ENCODE measurements at regions of chr2 and their contacts with region 1.

Region 1: GRCh38 chr2:162013514-162014475 is 60.2 kb downstream of the DPP4 start:
- DNase-seq: peak; percentile 39 to 61 (median 48)
- H3K4me3 ChIP-seq: no peak overlapping the region
- H3K4me3 Mint-ChIP-seq: peak overlapping the region; percentile 58 to 84 (median 76)
- H3K27ac ChIP-seq: peak overlapping the region; percentile 72
- H3K27ac Mint-ChIP-seq: peak overlapping the region; percentile 92 to 100 (median 97)
- H3K4me1 ChIP-seq: peaks cover 71% of the 10 kb centered on the region
- H3K4me1 Mint-ChIP-seq: peaks cover 52 to 79% (median 64%) of the 10 kb centered on the region in 4 donors
- H3K27me3 ChIP-seq: no peaks in the 10 kb centered on the region
- H3K27me3 Mint-ChIP-seq: no peaks in the 10 kb centered on the region

Region 2: GRCh38 chr2:161160226-161161069 is 853.3 kb before region 1 on chr2 and contains the start of gene TANK:
- CTCF ChIA-PET with region 1: no interaction called
- POLR2A ChIA-PET with region 1: no interaction called
- intact Hi-C with region 1: loop called (anchors 10 kb)
- DNase-seq: peak; percentile 89 to 94 (median 91)
- H3K4me3 ChIP-seq: peak within 1 kb of the TSS; percentile 86 to 90
- H3K4me3 Mint-ChIP-seq: peak within 1 kb of the TSS; percentile 96 to 100 (median 98)
- H3K27ac ChIP-seq: peak within 1 kb of the TSS; percentile 95
- H3K27ac Mint-ChIP-seq: peak within 1 kb of the TSS; percentile 94 to 99 (median 98)
- H3K4me1 ChIP-seq: peaks cover 54% of the 10 kb centered on the region
- H3K4me1 Mint-ChIP-seq: peaks cover 37 to 84% (median 61%) of the 10 kb centered on the region in 4 donors
- H3K27me3 ChIP-seq: no peaks in the 10 kb centered on the region
- H3K27me3 Mint-ChIP-seq: no peaks in the 10 kb centered on the region
- total RNA-seq, gene TANK: 90.2 to 91.2 TPM

Region 3: GRCh38 chr2:161954103-161954502 is 59.7 kb before region 1 on chr2:
- CTCF ChIA-PET with region 1: interaction called, 22 read pairs
- POLR2A ChIA-PET with region 1: interaction called, 29 read pairs
- intact Hi-C with region 1: loop called (anchors 1 kb)
- DNase-seq: peak; percentile 56 to 72 (median 65)
- H3K4me3 ChIP-seq: no peak overlapping the region
- H3K4me3 Mint-ChIP-seq: peak overlapping the region in 7 of 8 donors; percentile 23 to 78 (median 60)
- H3K27ac ChIP-seq: no peak overlapping the region
- H3K27ac Mint-ChIP-seq: peak overlapping the region; percentile 14 to 90 (median 59)
- H3K4me1 ChIP-seq: peaks cover 69% of the 10 kb centered on the region
- H3K4me1 Mint-ChIP-seq: peaks cover 48 to 61% (median 54%) of the 10 kb centered on the region in 4 donors
- H3K27me3 ChIP-seq: no peaks in the 10 kb centered on the region
- H3K27me3 Mint-ChIP-seq: no peaks in the 10 kb centered on the region

Region 4: GRCh38 chr2:161998857-161999256 is 14.9 kb before region 1 on chr2:
- CTCF ChIA-PET with region 1: interaction called, 16 read pairs
- POLR2A ChIA-PET with region 1: interaction called, 33 read pairs
- intact Hi-C with region 1: loop called (anchors 1 kb)
- DNase-seq: no peak
- H3K4me3 ChIP-seq: no peak overlapping the region
- H3K4me3 Mint-ChIP-seq: peak overlapping the region in 2 of 8 donors; percentile 11 to 49
- H3K27ac ChIP-seq: no peak overlapping the region
- H3K27ac Mint-ChIP-seq: peak overlapping the region; percentile 3 to 91 (median 79)
- H3K4me1 ChIP-seq: peaks cover 31% of the 10 kb centered on the region
- H3K4me1 Mint-ChIP-seq: peaks cover 33 to 63% (median 46%) of the 10 kb centered on the region in 4 donors
- H3K27me3 ChIP-seq: no peaks in the 10 kb centered on the region
- H3K27me3 Mint-ChIP-seq: no peaks in the 10 kb centered on the region

Region 5: DNA sequence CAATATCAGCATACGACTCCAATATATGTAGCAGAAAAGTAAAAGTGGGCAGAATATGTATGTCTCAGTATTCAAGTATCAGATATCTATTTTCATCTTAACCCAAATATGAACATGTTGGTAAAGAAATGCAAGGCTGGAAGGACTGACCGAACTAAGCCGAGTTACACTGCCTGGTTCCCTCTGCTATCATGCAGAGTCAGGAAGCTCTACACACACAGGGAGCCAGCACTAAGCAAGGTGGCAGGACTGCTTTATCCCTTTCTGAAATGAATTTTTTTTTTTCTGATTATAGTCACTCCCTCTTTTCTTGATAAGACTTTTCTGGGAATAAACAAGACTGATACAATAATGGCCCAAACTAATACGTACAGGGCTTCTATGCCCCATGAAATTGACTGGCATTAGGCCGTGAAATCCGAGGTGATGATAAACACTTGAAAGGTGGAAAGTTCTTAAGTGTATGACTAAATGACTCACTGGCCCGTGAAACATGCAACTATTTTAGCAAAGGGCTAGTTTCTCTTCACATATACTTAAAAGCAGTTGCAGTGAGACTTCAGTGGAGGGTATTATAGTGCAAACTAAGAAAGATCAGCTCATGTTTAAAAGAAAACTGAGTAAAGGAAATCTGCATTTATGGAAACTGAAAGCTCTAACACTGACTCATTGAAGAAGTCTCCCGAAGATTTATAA is 45.3 kb after region 1 on chr2:
- CTCF ChIA-PET with region 1: interaction called, 11 read pairs
- POLR2A ChIA-PET with region 1: interaction called, 37 read pairs
- intact Hi-C with region 1: loop called (anchors 1 kb)
- DNase-seq: peak in 2 of 5 donors; percentile 16 to 47
- H3K4me3 ChIP-seq: peak overlapping the region in 1 of 2 donors; percentile 4
- H3K4me3 Mint-ChIP-seq: peak overlapping the region; percentile 75 to 91 (median 84)
- H3K27ac ChIP-seq: peak overlapping the region; percentile 41
- H3K27ac Mint-ChIP-seq: peak overlapping the region; percentile 82 to 94 (median 91)
- H3K4me1 ChIP-seq: peaks cover 84% of the 10 kb centered on the region
- H3K4me1 Mint-ChIP-seq: peaks cover 68 to 91% (median 80%) of the 10 kb centered on the region in 4 donors
- H3K27me3 ChIP-seq: no peaks in the 10 kb centered on the region
- H3K27me3 Mint-ChIP-seq: no peaks in the 10 kb centered on the region

Region 6: GRCh38 chr2:162123806-162124758 is 110.3 kb after region 1 on chr2:
- CTCF ChIA-PET with region 1: interaction called, 32 read pairs
- POLR2A ChIA-PET with region 1: interaction called, 3 read pairs
- intact Hi-C with region 1: no loop called
- DNase-seq: peak in 4 of 5 donors; percentile 58 to 64 (median 60)
- H3K4me3 ChIP-seq: no peak overlapping the region
- H3K4me3 Mint-ChIP-seq: no peak overlapping the region
- H3K27ac ChIP-seq: no peak overlapping the region
- H3K27ac Mint-ChIP-seq: peak overlapping the region in 2 of 7 donors; percentile 18 to 64
- H3K4me1 ChIP-seq: peaks cover 6% of the 10 kb centered on the region
- H3K4me1 Mint-ChIP-seq: peaks cover 11 to 16% (median 12%) of the 10 kb centered on the region in 4 donors
- H3K27me3 ChIP-seq: no peaks in the 10 kb centered on the region
- H3K27me3 Mint-ChIP-seq: no peaks in the 10 kb centered on the region

Region 7: DNA sequence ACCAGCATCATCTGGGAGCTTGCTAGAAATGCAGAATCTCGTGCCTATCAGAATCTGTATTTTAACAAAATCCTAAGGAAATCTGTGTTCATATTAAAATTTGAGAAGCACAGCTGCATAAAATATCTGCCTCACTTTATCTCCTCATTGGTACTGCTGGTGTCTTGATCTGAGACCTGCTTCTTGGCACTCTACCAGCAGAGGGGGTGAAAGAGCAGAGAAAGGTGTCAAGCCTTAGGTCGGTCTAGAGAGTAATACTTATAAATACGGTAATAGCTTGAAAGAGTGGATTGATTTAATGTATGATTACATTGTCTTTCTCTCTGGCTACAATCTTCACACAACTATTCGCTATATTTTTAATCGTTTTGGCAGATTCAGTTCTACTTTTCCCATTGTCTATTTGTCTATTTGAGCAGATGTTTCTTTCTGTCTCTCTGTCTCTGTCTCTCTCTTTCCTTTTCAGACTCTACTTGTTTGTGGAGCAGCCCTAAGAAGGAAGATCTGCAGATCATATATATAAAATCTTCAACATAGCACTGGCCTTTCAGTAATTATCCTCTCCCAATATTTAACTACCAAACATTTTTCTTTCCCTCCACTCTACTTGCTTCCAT is 139.9 kb after region 1 on chr2:
- CTCF ChIA-PET with region 1: no interaction called
- POLR2A ChIA-PET with region 1: no interaction called
- intact Hi-C with region 1: no loop called
- DNase-seq: peak in 4 of 5 donors; percentile 55 to 58 (median 57)
- H3K4me3 ChIP-seq: no peak overlapping the region
- H3K4me3 Mint-ChIP-seq: peak overlapping the region in 5 of 8 donors; percentile 7 to 72 (median 35)
- H3K27ac ChIP-seq: no peak overlapping the region
- H3K27ac Mint-ChIP-seq: no peak overlapping the region
- H3K4me1 ChIP-seq: peaks cover 6% of the 10 kb centered on the region
- H3K4me1 Mint-ChIP-seq: peaks cover 0 to 5% (median 3%) of the 10 kb centered on the region in 4 donors
- H3K27me3 ChIP-seq: no peaks in the 10 kb centered on the region
- H3K27me3 Mint-ChIP-seq: peaks cover 14 to 16% of the 10 kb centered on the region in 2 donors

Region 8: DNA sequence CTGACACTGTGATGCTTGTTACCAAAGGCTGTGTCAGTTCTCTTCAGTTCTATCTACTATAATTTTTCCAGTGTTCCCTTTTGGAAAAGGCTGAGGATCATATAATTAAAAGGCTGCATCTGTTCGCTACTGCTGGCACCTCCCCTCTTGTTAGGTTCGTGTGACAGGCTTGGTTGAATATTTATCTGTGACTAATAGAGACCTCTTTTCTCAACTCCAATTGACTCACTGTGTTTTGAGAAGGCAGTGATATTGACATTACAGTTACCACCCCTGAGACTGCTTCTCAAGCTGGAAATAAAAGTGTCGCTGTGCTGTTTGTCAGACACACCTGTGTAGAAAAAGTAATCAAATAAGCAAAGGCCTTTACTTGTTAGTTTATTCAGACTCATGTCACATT is 1030.3 kb after region 1 on chr2:
- CTCF ChIA-PET with region 1: no interaction called
- POLR2A ChIA-PET with region 1: no interaction called
- intact Hi-C with region 1: no loop called
- DNase-seq: no peak
- H3K4me3 ChIP-seq: no peak overlapping the region
- H3K4me3 Mint-ChIP-seq: no peak overlapping the region
- H3K27ac ChIP-seq: no peak overlapping the region
- H3K27ac Mint-ChIP-seq: no peak overlapping the region
- H3K4me1 ChIP-seq: no peaks in the 10 kb centered on the region
- H3K4me1 Mint-ChIP-seq: no peaks in the 10 kb centered on the region
- H3K27me3 ChIP-seq: no peaks in the 10 kb centered on the region
- H3K27me3 Mint-ChIP-seq: no peaks in the 10 kb centered on the region